ENCODE measurements at regions of chr10 and their contacts with region 1.

Region 1: DNA sequence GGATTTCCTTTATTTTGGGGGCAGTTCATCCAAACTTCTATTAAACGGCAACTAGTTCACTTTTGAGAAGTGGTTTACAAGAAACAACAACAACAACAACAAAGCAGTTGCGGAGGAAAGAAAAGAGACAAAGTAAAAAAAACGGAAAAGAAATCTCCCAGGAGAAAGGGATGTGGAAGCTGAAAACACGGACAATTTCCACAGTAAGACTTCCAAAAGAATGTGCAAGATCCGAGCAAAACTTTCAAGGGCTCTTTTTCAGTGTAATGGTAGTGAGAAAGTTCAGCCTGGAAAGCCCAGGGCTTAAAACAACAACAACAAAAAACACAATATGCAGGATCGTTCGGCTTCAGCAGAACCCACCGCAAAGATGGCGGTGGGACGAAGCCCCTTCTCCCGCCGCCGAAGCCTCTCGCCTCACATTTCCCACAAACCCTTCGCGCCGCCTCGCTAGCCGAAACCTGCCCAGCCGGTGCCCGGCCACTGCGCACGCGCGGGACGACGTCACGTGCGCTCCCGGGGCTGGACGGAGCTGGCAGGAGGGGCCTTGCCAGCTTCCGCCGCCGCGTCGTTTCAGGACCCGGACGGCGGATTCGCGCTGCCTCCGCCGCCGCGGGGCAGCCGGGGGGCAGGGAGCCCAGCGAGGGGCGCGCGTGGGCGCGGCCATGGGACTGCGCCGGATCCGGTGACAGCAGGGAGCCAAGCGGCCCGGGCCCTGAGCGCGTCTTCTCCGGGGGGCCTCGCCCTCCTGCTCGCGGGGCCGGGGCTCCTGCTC is at the start of gene TNKS2:
- DNase-seq: peak; percentile 99
- H3K4me3 Mint-ChIP-seq: peak within 1 kb of the TSS; percentile 96
- H3K27ac Mint-ChIP-seq: peak within 1 kb of the TSS; percentile 98
- H3K4me1 Mint-ChIP-seq: peaks cover 51% of the 10 kb centered on the region
- H3K27me3 Mint-ChIP-seq: no peaks in the 10 kb centered on the region
- total RNA-seq, gene TNKS2: 27.5 and 28.8 TPM in 2 replicates

Region 2: DNA sequence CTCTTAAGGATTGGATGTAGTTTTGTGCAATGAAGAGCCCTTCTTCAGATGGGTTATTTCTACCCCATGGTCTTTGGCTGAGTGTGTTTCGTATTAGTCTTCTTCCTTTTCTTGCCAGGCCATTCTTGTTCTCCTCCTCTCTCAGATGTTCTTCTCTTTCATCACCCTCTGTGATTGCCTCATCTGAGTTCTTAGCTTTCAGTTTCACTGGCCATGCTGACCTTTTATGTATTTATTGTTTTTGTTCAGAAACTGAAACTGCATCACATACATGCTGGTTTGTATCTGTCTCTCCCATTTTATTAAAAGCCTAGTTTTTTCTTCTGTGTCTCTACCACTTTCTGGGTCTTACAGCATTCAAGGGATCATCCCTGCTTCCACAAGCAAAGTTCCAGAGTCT is 599.3 kb before region 1 on chr10:
- intact Hi-C with region 1: loop called (anchors 5 kb)
- DNase-seq: peak; percentile 84
- H3K4me3 Mint-ChIP-seq: peak overlapping the region; percentile 67
- H3K27ac Mint-ChIP-seq: peak overlapping the region; percentile 78
- H3K4me1 Mint-ChIP-seq: peaks cover 68% of the 10 kb centered on the region
- H3K27me3 Mint-ChIP-seq: no peaks in the 10 kb centered on the region

Region 3: GRCh38 chr10:91409869-91410637 is 388.0 kb before region 1 on chr10 and contains the start of gene HECTD2:
- intact Hi-C with region 1: loop called (anchors 1 kb)
- DNase-seq: peak; percentile 94
- H3K4me3 Mint-ChIP-seq: peak within 1 kb of the TSS; percentile 93
- H3K27ac Mint-ChIP-seq: peak within 1 kb of the TSS; percentile 96
- H3K4me1 Mint-ChIP-seq: peaks cover 17% of the 10 kb centered on the region
- H3K27me3 Mint-ChIP-seq: peaks cover 25% of the 10 kb centered on the region
- total RNA-seq, gene HECTD2: 4.5 and 5.5 TPM in 2 replicates

Region 4: GRCh38 chr10:91758303-91759146 is 39.5 kb before region 1 on chr10:
- intact Hi-C with region 1: loop called (anchors 2 kb)
- DNase-seq: no peak
- H3K4me3 Mint-ChIP-seq: no peak overlapping the region
- H3K27ac Mint-ChIP-seq: no peak overlapping the region
- H3K4me1 Mint-ChIP-seq: peaks cover 5% of the 10 kb centered on the region
- H3K27me3 Mint-ChIP-seq: peaks cover 49% of the 10 kb centered on the region

Region 5: DNA sequence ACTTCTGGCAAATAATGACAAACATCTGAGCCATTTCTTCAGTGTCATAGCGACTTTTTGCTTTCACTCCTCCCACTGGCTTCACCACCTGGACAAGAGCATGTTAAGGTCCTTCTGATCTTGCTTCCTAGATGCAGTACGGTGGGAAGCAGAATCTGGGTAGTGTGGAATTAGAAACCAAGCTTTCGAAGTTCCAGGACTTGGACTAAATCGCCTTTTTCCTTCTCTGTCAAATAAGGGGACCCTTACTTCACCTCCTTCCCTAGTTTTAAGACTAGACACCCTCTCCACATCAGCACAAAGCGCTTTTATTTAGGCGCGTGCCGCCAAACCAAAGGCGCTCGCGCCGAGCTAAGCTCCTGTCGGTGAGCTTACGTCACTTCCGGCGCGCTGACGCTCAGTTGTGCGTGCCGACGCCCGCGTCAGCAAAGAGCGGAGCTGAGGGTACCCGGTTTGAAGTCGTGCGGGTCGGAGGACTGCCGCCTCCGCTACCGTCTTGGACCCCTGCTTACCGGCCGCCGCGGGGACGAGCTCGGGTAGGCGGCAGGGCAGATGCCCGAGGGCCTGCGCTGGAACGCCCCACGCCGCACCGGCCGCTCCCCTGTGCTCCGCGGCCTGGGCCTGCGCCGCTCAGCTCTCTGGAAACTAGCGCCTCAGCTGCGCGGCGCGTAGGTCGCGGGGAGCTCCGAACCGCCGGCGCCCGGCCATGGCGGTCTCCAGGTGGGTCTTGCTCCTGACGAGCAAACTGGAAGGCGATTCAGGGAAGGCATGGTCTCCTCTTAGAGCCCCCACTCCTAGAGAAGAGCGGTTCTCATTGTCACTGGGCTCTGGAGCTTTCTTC is 125.5 kb after region 1 on chr10 and contains the start of gene BTAF1:
- intact Hi-C with region 1: loop called (anchors 1 kb)
- DNase-seq: peak; percentile 97
- H3K4me3 Mint-ChIP-seq: peak within 1 kb of the TSS; percentile 87
- H3K27ac Mint-ChIP-seq: peak within 1 kb of the TSS; percentile 99
- H3K4me1 Mint-ChIP-seq: peaks cover 28% of the 10 kb centered on the region
- H3K27me3 Mint-ChIP-seq: peaks cover 2% of the 10 kb centered on the region
- total RNA-seq, gene BTAF1: 63.9 and 67.1 TPM in 2 replicates

Region 6: DNA sequence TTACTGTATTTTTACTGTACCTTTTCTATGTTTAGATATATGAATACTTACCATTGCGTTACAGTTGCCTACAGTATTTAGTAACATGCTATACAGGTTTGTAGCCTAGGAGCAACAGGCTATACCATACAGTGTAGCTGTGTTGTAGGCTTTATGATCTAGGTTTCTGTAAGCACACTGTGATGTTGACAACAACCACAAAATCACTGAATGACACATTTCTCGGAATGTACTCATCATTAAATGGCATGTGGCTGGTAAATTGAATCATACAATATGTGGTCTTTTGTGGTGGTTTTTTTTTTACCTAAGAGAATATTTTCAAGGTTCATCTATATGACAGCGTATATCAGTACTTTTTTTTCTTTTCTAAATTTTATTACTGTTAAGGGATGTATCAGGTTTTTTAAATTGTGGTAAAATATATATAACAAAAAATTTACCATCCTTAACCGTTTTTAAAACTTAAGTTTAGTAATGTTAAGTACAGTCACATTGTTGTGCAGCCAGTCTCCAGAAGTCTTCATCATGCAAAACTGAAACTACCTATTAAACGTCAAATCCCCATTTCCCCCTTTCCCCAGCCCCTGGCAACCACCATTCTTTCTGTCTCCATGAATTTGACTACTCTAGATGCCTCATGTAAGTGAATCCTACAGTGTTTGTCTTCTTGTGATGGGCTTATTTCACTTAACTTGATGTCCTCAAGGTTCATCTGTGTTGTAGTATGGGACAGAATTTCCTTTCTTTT is 147.0 kb after region 1 on chr10:
- intact Hi-C with region 1: loop called (anchors 2 kb)
- DNase-seq: peak; percentile 73
- H3K4me3 Mint-ChIP-seq: peak overlapping the region; percentile 60
- H3K27ac Mint-ChIP-seq: peak overlapping the region; percentile 84
- H3K4me1 Mint-ChIP-seq: peaks cover 22% of the 10 kb centered on the region
- H3K27me3 Mint-ChIP-seq: no peaks in the 10 kb centered on the region

Region 7: GRCh38 chr10:92164036-92164696 is 366.1 kb after region 1 on chr10:
- intact Hi-C with region 1: no loop called
- DNase-seq: no peak
- H3K4me3 Mint-ChIP-seq: no peak overlapping the region
- H3K27ac Mint-ChIP-seq: no peak overlapping the region
- H3K4me1 Mint-ChIP-seq: no peaks in the 10 kb centered on the region
- H3K27me3 Mint-ChIP-seq: no peaks in the 10 kb centered on the region

Measured in activated CD4-positive, alpha-beta T cell treated with anti-CD3 and anti-CD28 coated beads, Interleukin-2, amount 10 ng/mL, durations not matched to agents 24 days and 14 days (primary cell).